ENCODE measurements at regions of chr15 and their contacts with region 1.

Region 1: DNA sequence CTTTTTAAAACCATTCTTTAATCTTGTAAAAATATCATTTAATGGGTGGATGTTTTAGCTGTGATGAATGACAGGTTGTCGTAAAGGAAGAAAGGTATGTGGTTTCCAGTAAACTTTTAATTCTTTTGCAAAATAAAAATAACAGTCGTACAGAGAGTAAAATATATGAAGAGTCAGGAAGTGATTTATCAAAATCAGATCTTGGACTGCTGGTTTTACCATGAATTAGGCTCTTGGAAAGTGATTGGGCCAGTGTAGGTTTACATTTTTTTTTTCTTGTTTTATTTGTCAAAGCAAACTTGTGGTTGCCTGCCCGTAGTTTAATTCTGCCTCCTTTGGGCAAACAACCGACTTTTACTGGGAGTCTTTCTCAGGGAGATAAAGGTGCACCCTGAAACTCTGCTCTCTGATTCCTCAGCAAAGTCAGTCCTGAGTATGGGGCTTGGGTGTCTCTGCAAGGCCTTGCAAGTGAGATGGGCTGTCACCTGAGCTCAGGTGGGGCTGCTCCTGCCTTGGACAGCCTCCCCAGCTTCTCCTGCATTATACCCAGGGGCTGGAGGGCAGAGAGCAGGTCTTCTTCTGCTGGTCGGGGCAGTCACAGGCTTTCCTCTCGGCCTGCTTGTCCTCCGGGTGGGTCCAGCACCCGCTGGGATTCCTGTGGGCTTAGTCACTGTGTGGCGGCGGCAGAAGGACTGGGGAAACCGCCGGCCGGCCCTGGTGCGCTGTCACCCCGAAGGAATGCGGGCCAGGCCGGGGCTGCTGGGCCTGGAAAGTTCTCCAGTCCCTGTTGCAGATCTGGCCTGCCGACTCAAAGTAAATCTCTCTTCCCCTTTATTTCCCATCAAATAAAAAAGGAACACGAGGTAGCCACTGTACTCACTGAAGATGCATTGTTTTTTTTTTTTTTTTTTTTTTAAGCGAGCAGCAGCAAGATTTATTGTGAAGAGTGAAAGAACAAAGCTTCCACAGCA is 79.1 kb downstream of the IGF1R start:
- DNase-seq: peak; percentile 94 to 97
- H3K4me3 ChIP-seq: peak overlapping the region; percentile 14; the same call in 1 of the 2 replicates
- H3K27ac ChIP-seq: peak overlapping the region; percentile 91
- H3K4me1 ChIP-seq: peaks cover 45% of the 10 kb centered on the region
- H3K27me3 ChIP-seq: no peaks in the 10 kb centered on the region
- CTCF ChIP-seq: no peak

Region 2: GRCh38 chr15:98654863-98655262 is 72.5 kb before region 1 on chr15:
- CTCF ChIA-PET with region 1: no interaction called
- POLR2A ChIA-PET with region 1: no interaction called
- intact Hi-C with region 1: no loop called
- DNase-seq: no peak
- H3K4me3 ChIP-seq: no peak overlapping the region
- H3K27ac ChIP-seq: no peak overlapping the region
- H3K4me1 ChIP-seq: peaks cover 36% of the 10 kb centered on the region
- H3K27me3 ChIP-seq: no peaks in the 10 kb centered on the region
- CTCF ChIP-seq: no peak

Region 3: DNA sequence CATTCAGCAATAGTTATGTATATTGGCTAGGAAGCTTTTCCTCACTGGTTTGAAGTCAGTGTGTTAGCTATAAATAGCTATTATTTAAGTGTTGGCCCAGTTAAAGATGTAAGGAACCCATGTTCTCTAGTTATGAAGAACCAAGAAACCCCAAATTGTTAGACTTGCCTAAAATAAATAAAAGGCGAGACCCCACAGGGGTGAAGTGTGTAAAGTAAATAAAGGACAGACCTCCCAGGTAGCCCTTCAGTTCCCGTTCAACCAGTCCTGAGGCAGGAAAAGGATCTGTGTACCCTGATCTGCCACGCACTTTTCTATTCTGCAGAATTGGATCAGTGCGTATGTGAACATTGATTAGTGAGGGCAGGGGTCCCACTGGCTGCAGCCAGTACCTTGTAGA is 18.4 kb before region 1 on chr15:
- CTCF ChIA-PET with region 1: no interaction called
- POLR2A ChIA-PET with region 1: interaction called, 13 read pairs
- intact Hi-C with region 1: no loop called
- DNase-seq: no peak
- H3K4me3 ChIP-seq: no peak overlapping the region
- H3K27ac ChIP-seq: no peak overlapping the region
- H3K4me1 ChIP-seq: peaks cover 11% of the 10 kb centered on the region
- H3K27me3 ChIP-seq: no peaks in the 10 kb centered on the region
- CTCF ChIP-seq: no peak

Region 4: GRCh38 chr15:98779463-98780071 is 52.2 kb after region 1 on chr15:
- CTCF ChIA-PET with region 1: no interaction called
- POLR2A ChIA-PET with region 1: no interaction called
- intact Hi-C with region 1: loop called (anchors 5 kb)
- DNase-seq: peak; percentile 62 to 77
- H3K4me3 ChIP-seq: no peak overlapping the region
- H3K27ac ChIP-seq: no peak overlapping the region
- H3K4me1 ChIP-seq: peaks cover 7% of the 10 kb centered on the region; the same call in 1 of the 2 replicates
- H3K27me3 ChIP-seq: no peaks in the 10 kb centered on the region
- CTCF ChIP-seq: peak; percentile 91

Region 5: GRCh38 chr15:98800437-98801233 is 73.2 kb after region 1 on chr15:
- CTCF ChIA-PET with region 1: no interaction called
- POLR2A ChIA-PET with region 1: no interaction called
- intact Hi-C with region 1: loop called (anchors 1 kb)
- DNase-seq: peak; percentile 50 to 81
- H3K4me3 ChIP-seq: peak overlapping the region; percentile 49; the same call in 1 of the 2 replicates
- H3K27ac ChIP-seq: peak overlapping the region; percentile 85
- H3K4me1 ChIP-seq: peaks cover 67% of the 10 kb centered on the region
- H3K27me3 ChIP-seq: no peaks in the 10 kb centered on the region
- CTCF ChIP-seq: no peak

Region 6: GRCh38 chr15:98858610-98859023 is 131.2 kb after region 1 on chr15:
- CTCF ChIA-PET with region 1: no interaction called
- POLR2A ChIA-PET with region 1: no interaction called
- intact Hi-C with region 1: no loop called
- DNase-seq: no peak
- H3K4me3 ChIP-seq: no peak overlapping the region
- H3K27ac ChIP-seq: peak overlapping the region; percentile 74
- H3K4me1 ChIP-seq: peaks cover 81% of the 10 kb centered on the region
- H3K27me3 ChIP-seq: no peaks in the 10 kb centered on the region
- CTCF ChIP-seq: no peak

Region 7: GRCh38 chr15:98873441-98874201 is 146.2 kb after region 1 on chr15:
- CTCF ChIA-PET with region 1: no interaction called
- POLR2A ChIA-PET with region 1: interaction called, 12 read pairs
- intact Hi-C with region 1: no loop called
- DNase-seq: peak; percentile 79 to 92
- H3K4me3 ChIP-seq: peak overlapping the region; percentile 44
- H3K27ac ChIP-seq: peak overlapping the region; percentile 95
- H3K4me1 ChIP-seq: peaks cover 80% of the 10 kb centered on the region
- H3K27me3 ChIP-seq: no peaks in the 10 kb centered on the region
- CTCF ChIP-seq: no peak

Region 8: DNA sequence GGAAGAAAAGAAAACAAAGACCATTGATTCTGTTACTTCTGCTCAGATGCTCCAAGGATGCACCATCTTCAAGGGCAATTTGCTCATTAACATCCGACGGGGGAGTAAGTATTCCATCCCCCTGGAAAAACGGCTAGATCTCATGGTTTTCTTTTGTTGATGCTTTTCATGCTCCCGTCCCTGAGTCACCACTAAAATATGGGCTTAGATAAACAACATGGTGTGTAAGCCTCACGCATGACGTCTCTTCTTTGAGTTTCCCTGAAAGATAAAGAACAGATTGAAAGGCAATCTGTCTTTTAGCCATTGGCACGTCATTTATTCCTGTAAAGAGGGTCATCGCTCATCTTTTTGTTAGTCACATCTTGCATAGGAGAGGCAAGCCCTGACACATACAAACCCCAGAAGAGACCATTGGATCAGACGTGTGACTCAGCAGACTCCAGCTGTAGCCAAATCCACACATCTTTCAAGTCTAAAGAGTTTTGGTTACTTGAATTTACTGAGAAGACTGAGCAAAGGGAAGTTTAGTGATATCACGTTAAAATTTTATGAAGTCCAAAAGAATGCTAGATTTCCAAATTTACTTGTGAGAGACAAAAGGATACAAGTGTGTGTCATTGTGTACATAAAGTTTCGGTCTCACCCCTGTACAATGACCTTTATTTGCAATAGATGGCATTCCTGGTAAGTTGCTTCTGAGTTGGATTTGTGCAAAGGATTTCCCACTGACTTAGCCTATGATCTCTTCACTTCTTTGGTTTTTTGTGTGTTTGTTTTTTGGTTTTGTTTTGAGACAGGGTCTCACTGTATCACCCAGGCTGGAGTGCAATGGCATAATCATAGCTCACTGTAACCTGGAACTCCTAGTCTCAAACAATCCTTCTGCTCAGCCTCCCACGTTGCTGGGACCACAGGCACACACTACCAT is 169.7 kb after region 1 on chr15:
- CTCF ChIA-PET with region 1: no interaction called
- POLR2A ChIA-PET with region 1: no interaction called
- intact Hi-C with region 1: loop called (anchors 2 kb)
- DNase-seq: peak; percentile 52 to 95
- H3K4me3 ChIP-seq: peak overlapping the region; percentile 10; the same call in 1 of the 2 replicates
- H3K27ac ChIP-seq: peak overlapping the region; percentile 97
- H3K4me1 ChIP-seq: peaks cover 41% of the 10 kb centered on the region
- H3K27me3 ChIP-seq: no peaks in the 10 kb centered on the region
- CTCF ChIP-seq: no peak

Region 9: GRCh38 chr15:99155961-99156450 is 428.6 kb after region 1 on chr15:
- CTCF ChIA-PET with region 1: no interaction called
- POLR2A ChIA-PET with region 1: no interaction called
- intact Hi-C with region 1: no loop called
- DNase-seq: peak in 1 of 2 experiments; percentile 8
- H3K4me3 ChIP-seq: no peak overlapping the region
- H3K27ac ChIP-seq: no peak overlapping the region
- H3K4me1 ChIP-seq: no peaks in the 10 kb centered on the region
- H3K27me3 ChIP-seq: no peaks in the 10 kb centered on the region
- CTCF ChIP-seq: no peak

Measured in PC-9 (cell line).